Esophagus muscularis mucosa (tissue), 4 donors: ENCODE measurements at regions of chr9 and their contacts with region 1.

Region 1: DNA sequence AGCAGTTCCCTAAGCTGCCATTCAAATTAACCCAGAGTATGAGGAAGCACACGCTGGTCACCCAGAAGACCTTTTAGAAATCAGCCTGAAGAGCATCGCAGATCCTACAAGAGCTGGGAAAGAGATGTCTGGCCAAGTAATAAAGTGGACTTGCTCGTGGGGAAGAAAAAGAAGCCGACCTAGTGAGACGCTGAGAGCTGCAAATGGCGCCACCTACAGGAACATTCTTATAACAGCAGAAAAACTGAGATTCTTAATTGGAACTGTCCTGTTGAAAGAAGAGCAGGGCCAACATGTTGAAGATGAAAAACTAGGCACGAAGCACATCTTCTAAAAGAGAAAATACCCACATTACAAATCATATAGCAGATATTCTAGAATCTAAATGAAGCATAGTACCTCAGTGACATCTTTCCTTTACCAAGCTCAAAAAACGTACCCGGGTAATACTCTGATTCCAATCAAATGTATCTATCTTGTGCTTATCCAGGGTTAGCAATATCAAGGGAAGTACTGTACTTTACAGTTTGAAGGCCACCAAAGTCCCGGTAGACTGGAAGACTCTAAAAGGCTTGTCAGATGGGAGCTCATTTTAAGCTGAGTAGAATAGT is 3.9 kb upstream of the GNAQ start:
- DNase-seq: no peak
- H3K4me3 ChIP-seq: peak overlapping the region in 2 of 4 donors; percentile 2 to 16
- H3K27ac ChIP-seq: peak overlapping the region; percentile 22 to 56 (median 30)
- H3K4me1 ChIP-seq: peaks cover 11 to 28% (median 23%) of the 10 kb centered on the region in 4 donors
- H3K27me3 ChIP-seq: no peaks in the 10 kb centered on the region
- CTCF ChIP-seq: peak; percentile 86 to 88 (median 88)
- EP300 ChIP-seq: no peak
- POLR2A ChIP-seq: no peak

Region 2: DNA sequence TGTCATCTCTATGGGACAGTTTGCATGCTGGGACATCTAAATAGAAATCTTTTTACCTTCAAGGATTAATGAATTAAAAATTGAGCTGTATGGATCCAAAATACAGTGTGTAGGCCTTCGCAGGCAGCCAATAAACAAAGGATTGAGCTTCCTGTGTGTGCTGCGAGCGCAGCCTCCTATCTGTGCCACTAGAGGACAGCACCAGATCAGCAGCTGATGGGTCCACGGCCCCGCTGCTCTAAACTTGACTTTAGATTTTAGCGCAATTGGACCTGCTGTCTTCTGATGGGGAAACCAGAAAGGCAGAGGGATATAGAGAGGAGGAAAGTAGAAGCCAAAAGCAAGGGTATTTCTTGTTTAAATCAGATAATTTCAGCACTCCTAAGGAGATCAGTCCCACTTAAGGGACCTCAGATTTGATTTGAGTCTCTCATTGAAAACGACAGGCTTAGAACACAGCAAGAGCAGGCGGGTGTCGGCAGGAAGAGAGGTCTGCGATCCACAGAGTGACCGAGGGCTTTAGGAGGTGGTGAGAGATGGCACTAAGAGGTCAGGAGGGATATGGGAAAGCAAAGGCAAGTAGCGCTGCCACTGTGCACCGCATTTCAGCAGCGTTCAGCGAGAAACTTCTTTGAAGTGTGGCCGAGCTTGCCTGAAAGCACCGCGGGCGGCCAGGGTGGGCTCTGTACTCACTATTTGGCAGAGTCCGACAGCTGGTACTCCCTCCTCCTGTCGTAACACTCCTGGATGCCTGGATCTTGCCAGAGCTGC is 601.6 kb before region 1 on chr9:
- intact Hi-C with region 1: loop called (anchors 5 kb)
- DNase-seq: no peak
- H3K4me3 ChIP-seq: no peak overlapping the region
- H3K27ac ChIP-seq: no peak overlapping the region
- H3K4me1 ChIP-seq: peaks cover 0 to 11% (median 8%) of the 10 kb centered on the region in 4 donors
- H3K27me3 ChIP-seq: no peaks in the 10 kb centered on the region
- CTCF ChIP-seq: peak; percentile 86 to 97 (median 88)
- EP300 ChIP-seq: no peak
- POLR2A ChIP-seq: no peak

Region 3: DNA sequence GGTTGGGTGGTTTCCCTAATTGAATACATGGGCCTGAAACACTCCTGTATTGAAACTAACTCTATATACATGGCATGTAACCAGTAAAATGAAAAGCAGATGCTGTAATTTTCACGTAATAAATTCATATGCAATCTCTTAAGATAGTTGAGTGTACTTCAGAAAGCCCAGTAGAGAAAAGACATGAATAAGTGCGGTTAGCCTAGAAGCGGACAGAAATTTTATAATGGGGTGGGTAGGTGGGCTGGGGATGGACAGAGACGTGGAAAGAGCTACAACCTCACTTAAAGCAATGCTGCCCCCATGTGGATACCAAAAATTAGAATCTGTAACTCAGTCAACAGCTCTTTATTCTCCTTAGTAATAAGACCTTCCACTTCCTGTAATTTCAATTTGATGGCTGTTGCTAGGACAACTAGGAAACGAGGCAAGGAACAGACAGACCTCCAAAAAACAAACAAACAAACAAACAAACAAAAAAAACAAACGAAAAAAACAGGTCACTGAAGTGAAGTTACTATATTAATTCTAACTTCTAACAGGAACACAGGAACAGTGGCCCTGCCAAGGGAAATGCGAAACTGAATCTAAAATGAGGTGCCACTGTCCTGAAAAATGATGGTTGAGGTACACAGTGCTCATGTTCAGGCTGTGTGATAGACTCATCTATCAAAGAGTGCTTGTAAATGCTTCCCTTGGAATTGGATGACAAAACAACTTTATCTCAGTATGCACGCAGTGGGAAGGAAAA is 284.0 kb before region 1 on chr9:
- intact Hi-C with region 1: loop called (anchors 5 kb)
- DNase-seq: no peak
- H3K4me3 ChIP-seq: peak overlapping the region in 1 of 4 donors; percentile 8
- H3K27ac ChIP-seq: peak overlapping the region; percentile 51 to 70 (median 58)
- H3K4me1 ChIP-seq: peaks cover 12 to 50% (median 43%) of the 10 kb centered on the region in 4 donors
- H3K27me3 ChIP-seq: no peaks in the 10 kb centered on the region
- CTCF ChIP-seq: peak; percentile 49 to 59 (median 58)
- EP300 ChIP-seq: no peak
- POLR2A ChIP-seq: no peak

Region 4: GRCh38 chr9:77841739-77842386 is 193.6 kb before region 1 on chr9:
- intact Hi-C with region 1: loop called (anchors 2 kb)
- DNase-seq: no peak
- H3K4me3 ChIP-seq: no peak overlapping the region
- H3K27ac ChIP-seq: peak overlapping the region in 1 of 4 donors; percentile 7
- H3K4me1 ChIP-seq: peaks cover 31 to 61% (median 52%) of the 10 kb centered on the region in 4 donors
- H3K27me3 ChIP-seq: no peaks in the 10 kb centered on the region
- CTCF ChIP-seq: peak; percentile 35 to 43 (median 36)
- EP300 ChIP-seq: no peak
- POLR2A ChIP-seq: no peak

Region 5: DNA sequence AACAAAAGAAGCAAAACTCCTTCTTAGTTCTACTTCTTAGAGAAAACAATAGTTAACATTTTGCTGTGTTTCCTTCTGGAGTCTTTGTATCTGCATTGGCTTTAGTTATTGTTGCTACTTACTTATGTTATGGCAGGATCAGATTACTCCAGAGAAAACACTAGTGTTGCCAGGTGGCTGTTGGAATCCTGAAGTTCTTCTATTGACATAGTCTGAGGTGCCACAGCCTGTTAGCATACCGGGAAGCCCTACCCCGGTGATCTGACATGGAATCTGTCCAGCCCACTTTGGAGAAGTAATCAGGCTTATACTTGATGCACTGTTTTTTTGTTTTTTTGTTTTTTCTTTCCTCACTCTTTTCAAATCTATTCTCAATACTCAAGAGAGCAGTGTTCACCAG is 131.9 kb after region 1 on chr9:
- intact Hi-C with region 1: no loop called
- DNase-seq: no peak
- H3K4me3 ChIP-seq: no peak overlapping the region
- H3K27ac ChIP-seq: no peak overlapping the region
- H3K4me1 ChIP-seq: no peaks in the 10 kb centered on the region
- H3K27me3 ChIP-seq: no peaks in the 10 kb centered on the region
- CTCF ChIP-seq: no peak
- EP300 ChIP-seq: no peak
- POLR2A ChIP-seq: no peak